Pancreas (tissue), 10 donors: ENCODE measurements at regions of chr17 and their contacts with region 1.

Region 1: DNA sequence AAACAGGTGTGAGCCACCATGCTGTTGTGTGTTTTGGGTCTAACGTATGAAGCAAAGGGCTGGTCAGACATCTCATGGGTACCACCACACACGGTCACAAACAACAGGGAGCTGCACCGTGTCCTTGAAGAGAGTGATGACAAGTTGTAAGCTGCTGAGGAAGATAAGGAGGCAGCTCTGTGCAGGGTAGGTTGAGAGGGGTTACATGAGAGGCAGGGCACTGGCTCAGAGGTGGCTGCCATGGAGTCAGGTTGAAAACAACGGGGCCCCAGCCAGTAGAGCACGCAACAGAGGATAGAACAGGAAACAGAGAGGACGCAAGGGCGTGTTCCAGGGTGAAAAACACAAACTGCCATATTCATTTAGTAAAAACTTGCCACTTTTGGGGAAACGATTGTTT is 52.2 kb downstream of the TRARG1 start:
- DNase-seq: peak in 2 of 6 donors; percentile 10 to 13
- ATAC-seq: peak in 1 of 4 donors; percentile 9
- H3K4me3 ChIP-seq: no peak overlapping the region
- H3K27ac ChIP-seq: no peak overlapping the region
- H3K4me1 ChIP-seq: no peaks in the 10 kb centered on the region
- H3K27me3 ChIP-seq: no peaks in the 10 kb centered on the region
- CTCF ChIP-seq: no peak

Region 2: GRCh38 chr17:951325-952132 is 380.2 kb before region 1 on chr17:
- intact Hi-C with region 1: no loop called
- DNase-seq: peak in 3 of 6 donors; percentile 40 to 57 (median 54)
- ATAC-seq: peak; percentile 72 to 87 (median 76)
- H3K4me3 ChIP-seq: no peak overlapping the region
- H3K27ac ChIP-seq: peak overlapping the region; percentile 16 to 68 (median 44)
- H3K4me1 ChIP-seq: no peaks in the 10 kb centered on the region
- H3K27me3 ChIP-seq: no peaks in the 10 kb centered on the region
- CTCF ChIP-seq: no peak

Region 3: DNA sequence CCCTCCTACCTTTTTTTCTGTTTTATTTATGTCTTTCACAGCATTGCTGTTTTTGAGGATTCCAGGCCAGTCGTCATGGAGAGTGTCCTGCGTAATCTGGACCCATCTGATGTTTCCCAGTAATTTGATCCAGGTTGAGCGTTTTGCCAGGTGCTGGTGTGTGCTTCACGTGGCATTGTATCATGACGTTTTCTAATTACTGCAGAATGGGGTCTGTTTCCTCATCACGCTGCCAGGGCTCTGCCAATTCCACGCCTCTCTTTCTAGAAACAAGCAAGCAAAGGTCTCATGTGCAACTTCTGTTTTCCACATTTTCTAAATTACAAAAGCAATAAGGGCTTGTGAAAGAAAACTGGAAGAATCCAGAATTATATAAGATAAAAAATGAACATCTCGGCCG is 89.8 kb before region 1 on chr17:
- intact Hi-C with region 1: no loop called
- DNase-seq: peak in 1 of 6 donors; percentile 47
- ATAC-seq: peak; percentile 77 to 84 (median 80)
- H3K4me3 ChIP-seq: no peak overlapping the region
- H3K27ac ChIP-seq: peak overlapping the region in 1 of 4 donors; percentile 8
- H3K4me1 ChIP-seq: no peaks in the 10 kb centered on the region
- H3K27me3 ChIP-seq: no peaks in the 10 kb centered on the region
- CTCF ChIP-seq: no peak

Region 4: DNA sequence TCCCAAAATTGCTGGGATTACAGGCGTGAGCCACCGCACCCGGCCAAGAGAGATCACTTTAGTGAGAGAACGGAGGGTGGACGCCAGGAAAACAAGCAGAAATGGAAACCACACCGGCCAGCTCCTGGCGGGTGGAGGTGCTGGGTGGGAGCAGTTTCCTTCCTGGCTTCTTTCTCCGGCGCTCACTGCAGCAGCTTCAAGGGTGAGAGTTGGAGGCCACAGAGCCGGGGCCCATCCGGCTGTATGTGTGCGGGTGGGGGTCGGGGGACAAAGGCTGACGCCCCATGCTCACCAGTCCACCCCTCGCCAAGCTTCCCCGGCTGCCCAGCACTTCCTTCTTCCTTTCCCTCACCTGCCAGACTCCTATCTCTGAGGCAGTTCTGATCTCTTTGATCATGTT is 75.0 kb before region 1 on chr17:
- intact Hi-C with region 1: loop called in 1 of 3 experiments (anchors 5 kb)
- DNase-seq: no peak
- ATAC-seq: no peak
- H3K4me3 ChIP-seq: no peak overlapping the region
- H3K27ac ChIP-seq: no peak overlapping the region
- H3K4me1 ChIP-seq: peaks cover 0 to 5% (median 0%) of the 10 kb centered on the region in 3 donors
- H3K27me3 ChIP-seq: no peaks in the 10 kb centered on the region
- CTCF ChIP-seq: no peak

Region 5: GRCh38 chr17:1379930-1380313 is 48.2 kb after region 1 on chr17:
- intact Hi-C with region 1: no loop called
- DNase-seq: no peak
- ATAC-seq: peak in 1 of 4 donors; percentile 30
- H3K4me3 ChIP-seq: no peak overlapping the region
- H3K27ac ChIP-seq: no peak overlapping the region
- H3K4me1 ChIP-seq: peaks cover 23 to 51% (median 38%) of the 10 kb centered on the region in 3 donors
- H3K27me3 ChIP-seq: no peaks in the 10 kb centered on the region
- CTCF ChIP-seq: no peak